HAP-1 (cell line): ENCODE measurements at regions of chr2 and their contacts with region 1.

Region 1: GRCh38 chr2:86221066-86221684 is 21.9 kb downstream of the MRPL35 start:
- DNase-seq: peak; percentile 46 to 71
- H3K4me3 ChIP-seq: no peak overlapping the region
- H3K4me1 ChIP-seq: peaks cover 12% of the 10 kb centered on the region
- H3K27me3 ChIP-seq: no peaks in the 10 kb centered on the region

Region 2: GRCh38 chr2:86368161-86368824 is 147.1 kb after region 1 on chr2:
- in situ Hi-C with region 1: loop called (anchors 10 kb)
- DNase-seq: peak; percentile 21 to 80
- H3K4me3 ChIP-seq: no peak overlapping the region
- H3K4me1 ChIP-seq: no peaks in the 10 kb centered on the region; the same call in 1 of the 2 replicates
- H3K27me3 ChIP-seq: no peaks in the 10 kb centered on the region